Mucosa of descending colon (tissue), 3 donors: ENCODE measurements at regions of chr1 and their contacts with region 1.

Region 1: DNA sequence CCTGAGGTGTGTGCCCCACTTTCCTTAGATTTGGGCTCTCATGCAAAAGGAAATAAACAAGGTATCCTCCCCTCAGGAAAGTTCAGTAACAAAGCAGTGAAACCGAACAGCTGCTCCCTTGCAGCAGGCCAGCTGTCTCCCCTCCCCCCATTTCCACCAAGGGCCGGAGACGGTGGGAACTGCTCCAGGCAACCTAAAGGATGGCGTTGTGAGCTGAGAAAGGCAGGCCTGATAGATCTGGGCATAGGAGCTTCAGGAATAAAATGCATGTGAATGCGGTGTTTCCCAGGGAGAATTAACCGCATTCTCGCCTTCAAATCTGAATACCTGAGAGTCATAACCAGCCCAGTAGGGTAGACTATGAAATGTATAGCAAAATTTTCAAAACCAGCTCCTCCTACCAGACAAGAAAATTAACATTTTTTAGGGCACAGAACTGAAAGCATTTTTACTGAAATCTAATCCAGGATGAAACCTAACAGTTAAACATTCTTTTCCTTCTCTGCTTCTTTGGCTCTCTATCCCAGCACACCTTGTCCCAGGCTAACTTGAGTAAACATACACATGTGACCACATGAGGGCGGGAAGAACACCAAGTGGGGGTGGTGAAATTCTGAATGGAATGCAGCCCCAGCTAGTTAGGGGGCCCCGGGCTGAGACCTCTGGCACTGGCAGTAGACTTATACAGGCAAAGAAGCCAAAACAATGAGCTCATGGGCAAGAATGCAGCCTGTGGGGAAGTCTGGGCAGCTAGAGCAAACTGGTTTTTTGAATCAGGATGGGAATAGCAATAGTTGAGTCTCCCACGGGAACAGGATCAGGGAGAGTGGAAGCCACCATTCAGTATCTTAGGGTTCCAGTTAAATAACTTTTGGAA is 11.5 kb downstream of the MCL1 start:
- DNase-seq: peak; percentile 71 to 79 (median 76)
- ATAC-seq: peak; percentile 63
- H3K4me3 ChIP-seq: no peak overlapping the region
- H3K4me1 ChIP-seq: peaks cover 76% of the 10 kb centered on the region
- CTCF ChIP-seq: no peak

Region 2: DNA sequence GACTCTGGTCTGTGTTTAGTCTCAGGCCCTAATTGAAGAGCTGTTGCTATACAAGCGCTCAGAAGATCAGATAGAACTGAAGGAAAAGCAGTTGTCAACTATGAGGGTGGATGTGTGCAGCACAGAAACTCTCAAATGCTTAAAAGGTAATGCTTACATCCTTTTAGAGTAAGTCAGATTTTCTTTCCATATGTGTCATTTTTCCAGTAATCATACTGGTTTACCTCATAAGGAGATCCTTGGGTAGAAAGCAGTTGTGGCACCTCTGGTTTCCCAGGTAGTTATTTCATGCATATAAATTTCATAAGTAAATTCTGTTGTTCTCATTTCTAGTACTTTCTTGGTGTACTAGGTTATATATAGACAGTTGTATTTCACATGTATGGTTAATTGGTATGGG is 123.7 kb before region 1 on chr1:
- intact Hi-C with region 1: no loop called
- DNase-seq: no peak
- ATAC-seq: no peak
- H3K4me3 ChIP-seq: no peak overlapping the region
- H3K4me1 ChIP-seq: no peaks in the 10 kb centered on the region
- CTCF ChIP-seq: no peak

Region 3: GRCh38 chr1:150613061-150613920 is 45.3 kb after region 1 on chr1:
- intact Hi-C with region 1: loop called in 1 of 2 experiments (anchors 5 kb)
- DNase-seq: peak in 1 of 3 donors; percentile 79
- ATAC-seq: peak; percentile 81
- H3K4me3 ChIP-seq: no peak overlapping the region
- H3K4me1 ChIP-seq: peaks cover 52% of the 10 kb centered on the region
- CTCF ChIP-seq: no peak